Naive thymus-derived CD4-positive, alpha-beta T cell (primary cell): ENCODE measurements at regions of chr7 and their contacts with region 1.

Region 1: DNA sequence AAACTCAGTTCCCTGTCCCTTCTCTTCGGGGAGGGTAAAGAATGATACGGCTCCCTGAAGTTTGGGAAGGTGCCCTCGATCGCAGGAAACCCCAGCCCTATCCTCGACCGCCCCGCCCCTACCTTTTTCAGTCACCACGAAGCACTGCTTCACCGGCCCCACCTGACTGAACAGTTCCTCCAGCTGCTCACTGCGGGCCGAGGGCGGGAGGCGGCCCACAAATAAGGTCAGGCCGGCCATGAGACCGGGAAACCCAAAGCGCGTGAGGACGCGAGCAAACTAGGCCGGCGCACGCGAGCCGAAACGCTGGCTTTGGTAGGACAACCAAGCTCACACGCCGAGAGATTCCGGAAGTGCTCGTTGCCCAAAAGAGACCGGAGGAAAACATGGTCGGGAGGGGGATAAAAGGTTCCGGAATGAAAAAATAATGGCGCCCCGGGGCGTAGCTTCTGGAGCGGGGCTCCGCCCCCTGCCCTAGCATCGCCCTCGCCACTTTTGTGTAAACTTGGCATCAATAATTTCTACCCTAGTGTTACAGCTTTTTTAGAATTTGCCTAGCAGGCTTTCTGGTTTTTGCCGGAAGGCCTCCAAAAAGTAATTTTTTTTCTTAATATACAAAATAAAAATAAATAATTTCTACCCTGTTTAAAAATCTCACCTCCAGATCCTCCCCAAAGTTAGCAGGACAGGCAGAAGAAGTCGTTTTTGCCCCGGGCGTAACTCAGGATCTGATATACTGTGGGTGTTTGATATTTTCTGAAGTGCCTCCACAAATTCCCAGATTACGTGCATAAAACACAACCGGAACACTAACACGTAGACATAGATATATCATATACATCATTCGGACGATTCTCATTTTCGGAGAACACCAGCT is at the start of gene RBM28:
- DNase-seq: peak; percentile 80 to 93 (median 90)
- ATAC-seq: peak; percentile 98
- H3K4me3 ChIP-seq: peak within 1 kb of the TSS; percentile 97
- H3K4me3 Mint-ChIP-seq: peak within 1 kb of the TSS; percentile 89 to 98 (median 96)
- H3K27ac ChIP-seq: peak within 1 kb of the TSS; percentile 83
- H3K27ac Mint-ChIP-seq: peak within 1 kb of the TSS; percentile 83 to 96 (median 93)
- H3K4me1 ChIP-seq: peaks cover 16 to 20% of the 10 kb centered on the region in 2 donors
- H3K4me1 Mint-ChIP-seq: peaks cover 19 to 44% (median 34%) of the 10 kb centered on the region in 7 donors
- H3K27me3 ChIP-seq: no peaks in the 10 kb centered on the region
- H3K27me3 Mint-ChIP-seq: peaks cover 0 to 15% (median 7%) of the 10 kb centered on the region in 5 donors
- total RNA-seq, gene RBM28: 30.1 to 51.0 (median 43.5) TPM

Region 2: DNA sequence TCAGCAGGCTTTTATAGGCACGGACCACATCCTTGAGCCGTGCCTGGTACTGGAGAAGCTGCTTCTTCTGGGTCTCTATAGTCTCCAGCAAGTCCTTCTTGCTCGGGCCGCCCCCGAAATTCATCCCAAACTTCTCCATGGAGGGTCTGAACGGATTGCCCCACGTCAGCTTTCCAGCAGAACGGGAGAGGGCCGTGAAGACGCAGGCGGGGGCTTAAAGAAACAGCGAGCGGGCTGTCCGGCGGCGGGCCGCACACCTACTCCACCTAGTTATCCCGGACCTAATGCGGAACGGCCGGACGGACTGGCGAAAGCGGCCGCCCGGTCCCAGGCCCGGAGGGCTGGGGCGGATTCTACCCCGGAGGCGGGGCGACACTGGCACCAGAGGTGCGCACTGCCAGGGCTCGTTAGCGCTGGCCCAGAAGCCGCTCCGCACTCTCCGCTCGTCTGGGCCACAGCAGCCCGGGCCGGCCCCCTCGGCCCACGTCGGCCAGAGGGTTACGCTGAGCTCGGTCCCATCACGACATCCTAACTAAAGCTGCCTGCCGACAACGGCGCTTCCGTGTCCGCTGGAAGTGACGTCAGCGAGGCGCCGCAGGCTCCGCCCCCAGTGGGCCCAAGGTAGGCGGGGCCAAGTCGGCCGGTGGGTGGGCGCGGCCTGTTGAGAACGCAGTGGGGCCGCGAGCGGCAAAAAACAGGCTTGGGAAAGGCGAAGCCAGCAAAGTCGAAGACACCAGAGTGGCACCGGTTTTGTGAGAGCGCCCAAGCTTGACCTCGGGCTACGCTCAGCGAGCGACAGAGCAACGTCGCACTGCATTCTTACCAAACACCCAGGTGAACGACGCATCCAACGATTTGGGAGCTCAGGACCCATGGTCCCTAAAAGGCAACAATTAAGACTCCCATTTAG is 758.5 kb before region 1 on chr7 and contains the start of gene GCC1:
- CTCF ChIA-PET with region 1: no interaction called
- POLR2A ChIA-PET with region 1: no interaction called
- intact Hi-C with region 1: loop called (anchors 2 to 5 kb)
- DNase-seq: peak; percentile 87 to 98 (median 93)
- ATAC-seq: peak; percentile 87
- H3K4me3 ChIP-seq: peak within 1 kb of the TSS; percentile 87
- H3K4me3 Mint-ChIP-seq: peak within 1 kb of the TSS; percentile 86 to 98 (median 92)
- H3K27ac ChIP-seq: peak within 1 kb of the TSS; percentile 88
- H3K27ac Mint-ChIP-seq: peak within 1 kb of the TSS; percentile 77 to 97 (median 94)
- H3K4me1 ChIP-seq: peaks cover 47 to 55% of the 10 kb centered on the region in 2 donors
- H3K4me1 Mint-ChIP-seq: peaks cover 55 to 88% (median 78%) of the 10 kb centered on the region in 7 donors
- H3K27me3 ChIP-seq: no peaks in the 10 kb centered on the region
- H3K27me3 Mint-ChIP-seq: no peaks in the 10 kb centered on the region
- total RNA-seq, gene GCC1: 19.6 to 31.3 (median 23.7) TPM

Region 3: DNA sequence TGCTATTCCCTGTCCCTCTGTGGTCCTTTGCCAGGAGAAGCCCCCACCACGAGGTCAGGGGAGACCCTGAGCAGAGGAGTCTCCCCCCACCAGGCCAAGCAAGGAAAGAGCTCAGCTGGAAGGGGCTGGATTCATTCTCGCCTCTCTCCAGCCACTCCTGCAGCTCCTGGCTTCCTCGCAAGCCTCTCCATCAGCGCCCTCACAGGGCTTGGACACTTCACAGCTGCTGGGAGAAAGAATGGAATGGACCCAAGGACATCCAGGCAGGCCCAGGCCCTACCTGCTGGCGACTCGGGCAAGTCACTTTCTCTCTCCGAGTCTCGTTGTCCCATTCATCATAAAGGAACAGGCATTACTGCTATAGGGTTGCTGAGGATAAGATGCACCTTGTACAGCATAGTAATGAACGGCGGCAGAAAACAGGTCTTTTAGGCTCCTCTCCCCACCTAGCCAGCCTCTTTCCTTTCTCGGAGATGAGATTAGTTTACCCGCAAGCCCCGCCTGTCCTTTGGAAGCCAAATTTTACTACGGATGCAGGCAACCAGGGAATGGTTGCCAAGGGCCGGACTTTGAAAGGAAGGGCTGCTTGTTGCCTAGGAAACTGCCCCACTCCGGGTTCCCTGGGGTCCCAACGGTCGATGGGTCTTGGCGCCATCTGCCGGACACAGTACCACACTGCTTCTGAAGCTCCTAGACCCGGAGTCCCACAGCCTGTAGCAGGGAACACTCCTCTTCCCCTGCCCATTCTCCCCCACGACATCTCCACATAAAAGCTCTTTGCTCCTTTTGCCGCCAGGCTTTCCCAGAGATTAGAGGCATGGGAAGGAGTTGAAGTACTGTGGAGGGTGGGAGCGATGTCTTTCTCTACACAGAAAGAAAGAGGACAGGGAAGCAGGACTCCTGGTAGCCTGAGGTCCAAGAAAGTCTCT is 43.7 kb after region 1 on chr7:
- CTCF ChIA-PET with region 1: interaction called, 60 read pairs
- POLR2A ChIA-PET with region 1: interaction called, 4 read pairs
- intact Hi-C with region 1: loop called in 1 of 2 experiments (anchors 1 kb)
- DNase-seq: peak; percentile 31 to 67 (median 48)
- ATAC-seq: peak; percentile 87
- H3K4me3 ChIP-seq: no peak overlapping the region
- H3K4me3 Mint-ChIP-seq: no peak overlapping the region
- H3K27ac ChIP-seq: no peak overlapping the region
- H3K27ac Mint-ChIP-seq: no peak overlapping the region
- H3K4me1 ChIP-seq: no peaks in the 10 kb centered on the region
- H3K4me1 Mint-ChIP-seq: peaks cover 0 to 6% (median 1%) of the 10 kb centered on the region in 7 donors
- H3K27me3 ChIP-seq: no peaks in the 10 kb centered on the region
- H3K27me3 Mint-ChIP-seq: peaks cover 0 to 4% (median 0%) of the 10 kb centered on the region in 5 donors

Region 4: GRCh38 chr7:128425850-128426249 is 82.1 kb after region 1 on chr7:
- CTCF ChIA-PET with region 1: interaction called, 15 read pairs
- POLR2A ChIA-PET with region 1: no interaction called
- intact Hi-C with region 1: loop called (anchors 1 kb)
- DNase-seq: peak; percentile 59 to 85 (median 73)
- ATAC-seq: peak; percentile 90
- H3K4me3 ChIP-seq: no peak overlapping the region
- H3K4me3 Mint-ChIP-seq: no peak overlapping the region
- H3K27ac ChIP-seq: no peak overlapping the region
- H3K27ac Mint-ChIP-seq: no peak overlapping the region
- H3K4me1 ChIP-seq: peaks cover 0 to 2% of the 10 kb centered on the region in 2 donors
- H3K4me1 Mint-ChIP-seq: peaks cover 0 to 16% (median 0%) of the 10 kb centered on the region in 7 donors
- H3K27me3 ChIP-seq: no peaks in the 10 kb centered on the region
- H3K27me3 Mint-ChIP-seq: peaks cover 0 to 8% (median 5%) of the 10 kb centered on the region in 5 donors

Region 5: GRCh38 chr7:128530855-128531104 is 187.0 kb after region 1 on chr7:
- CTCF ChIA-PET with region 1: interaction called, 3 read pairs
- POLR2A ChIA-PET with region 1: no interaction called
- intact Hi-C with region 1: loop called in 1 of 2 experiments (anchors 2 kb)
- DNase-seq: no peak
- ATAC-seq: no peak
- H3K4me3 ChIP-seq: peak overlapping the region; percentile 46
- H3K4me3 Mint-ChIP-seq: peak overlapping the region in 1 of 10 donors; percentile 16
- H3K27ac ChIP-seq: peak overlapping the region; percentile 95
- H3K27ac Mint-ChIP-seq: no peak overlapping the region
- H3K4me1 ChIP-seq: peaks cover 0 to 4% of the 10 kb centered on the region in 2 donors
- H3K4me1 Mint-ChIP-seq: peaks cover 23 to 42% (median 40%) of the 10 kb centered on the region in 7 donors
- H3K27me3 ChIP-seq: no peaks in the 10 kb centered on the region
- H3K27me3 Mint-ChIP-seq: no peaks in the 10 kb centered on the region